Posterior vena cava (tissue), 2 donors: ENCODE measurements at regions of chr6 and their contacts with region 1.

Region 1: DNA sequence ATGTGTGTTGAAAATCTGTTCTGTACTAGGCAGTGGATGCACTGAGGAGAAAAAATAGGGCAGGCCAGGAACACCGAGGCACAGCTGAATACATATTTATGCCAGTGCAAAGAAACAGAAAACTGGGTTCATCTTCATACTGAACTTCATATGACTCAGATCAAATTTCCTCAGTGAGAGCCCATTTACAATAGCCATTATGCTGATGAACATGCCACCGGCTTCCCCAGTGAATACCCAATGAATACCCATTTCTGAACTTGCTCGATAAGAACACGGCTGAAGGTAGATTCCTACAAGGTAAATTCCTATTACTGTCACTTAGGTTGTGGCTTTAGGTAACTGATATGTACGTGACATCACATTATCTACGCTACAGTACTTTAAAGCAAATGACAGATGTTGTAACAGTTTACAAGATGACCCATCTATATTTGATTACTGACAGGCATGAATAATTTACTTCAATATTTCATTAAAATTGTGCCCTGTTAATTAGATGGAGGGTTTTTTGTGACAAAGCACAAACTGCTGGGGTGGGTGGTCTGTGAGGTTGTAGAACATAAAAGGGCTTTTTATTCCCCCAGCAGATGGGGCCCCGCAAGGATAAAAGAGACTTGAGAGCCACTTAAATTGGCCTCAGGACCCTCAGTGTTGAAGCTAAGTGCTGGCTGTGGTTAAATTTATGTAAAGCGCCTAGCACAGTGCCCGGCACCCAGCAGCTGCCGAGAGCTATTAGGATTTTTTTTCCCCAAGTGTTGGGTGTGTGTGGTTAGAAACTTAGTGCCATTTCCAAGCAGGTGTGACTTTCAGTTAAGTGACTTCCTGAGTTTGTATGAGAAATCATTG is 264.5 kb downstream of the CD83 start:
- DNase-seq: no peak

Region 2: DNA sequence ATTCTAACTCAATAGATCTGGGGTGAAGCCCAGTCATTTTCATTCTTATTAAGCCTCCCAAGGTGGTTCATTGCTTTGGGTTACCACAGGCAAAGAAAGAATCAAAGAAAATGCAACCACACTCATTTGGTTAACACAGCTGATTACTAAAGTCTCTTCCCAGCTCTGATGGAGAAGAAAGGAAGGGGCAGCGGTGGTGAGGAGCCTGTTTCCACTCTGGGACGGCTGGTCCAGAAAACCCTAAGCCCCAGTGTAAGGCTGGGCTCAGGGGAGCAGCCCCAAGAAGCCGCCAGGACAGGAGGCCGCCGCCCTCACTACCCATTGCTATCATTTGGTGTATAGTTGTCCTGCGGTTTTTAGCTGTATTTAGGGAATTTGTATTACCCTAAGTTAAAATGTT is 37.6 kb before region 1 on chr6:
- intact Hi-C with region 1: loop called in 1 of 2 experiments (anchors 2 kb)
- DNase-seq: no peak

Region 3: GRCh38 chr6:14354919-14355572 is 27.0 kb before region 1 on chr6:
- intact Hi-C with region 1: loop called in 1 of 2 experiments (anchors 1 kb)
- DNase-seq: peak; percentile 93

Region 4: DNA sequence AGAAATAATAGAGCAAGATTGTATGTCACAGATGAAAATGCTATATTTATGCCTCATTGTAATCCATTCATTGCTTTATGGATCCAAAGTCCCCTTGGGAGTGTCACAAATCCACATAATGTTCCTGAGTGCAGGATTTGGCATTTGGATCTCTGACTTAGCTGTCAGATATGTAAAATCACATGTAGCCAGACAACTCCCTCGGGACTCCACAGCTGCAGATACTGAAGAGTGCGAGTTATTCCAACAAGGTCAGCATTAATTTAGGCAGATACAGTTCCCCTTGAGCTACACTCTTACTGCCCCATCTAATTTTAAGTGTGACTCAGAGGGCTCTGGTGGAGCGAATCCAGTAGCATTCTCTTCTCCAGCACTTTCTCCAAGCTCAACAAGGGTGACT is 168.8 kb after region 1 on chr6:
- intact Hi-C with region 1: no loop called
- DNase-seq: no peak

Region 5: DNA sequence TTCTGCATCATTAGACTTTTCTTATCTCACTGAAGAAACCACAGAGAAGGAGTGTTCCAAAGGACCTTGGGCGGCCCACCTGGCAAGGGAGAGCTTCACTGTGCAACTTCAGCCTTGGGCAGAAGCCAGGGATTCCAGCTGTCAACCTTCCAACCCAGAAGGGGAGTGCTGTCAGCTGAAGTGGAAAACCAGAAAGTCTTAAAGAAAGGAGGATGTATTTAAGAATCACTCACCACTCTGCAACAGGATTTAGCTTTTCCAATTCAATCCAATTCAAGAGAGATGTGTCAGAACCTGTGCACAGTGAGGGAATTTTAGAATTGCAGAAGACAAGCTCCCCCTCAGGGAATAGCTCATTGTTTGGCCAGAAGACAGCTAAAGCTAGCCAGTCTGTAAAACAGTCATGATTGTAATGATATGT is 289.2 kb after region 1 on chr6:
- intact Hi-C with region 1: no loop called
- DNase-seq: no peak